ENCODE measurements at regions of chr11 and their contacts with region 1.

Region 1: GRCh38 chr11:17978553-17979287 is 34.1 kb downstream of the SERGEF start:
- DNase-seq: peak in 2 of 4 donors; percentile 36 to 40
- ATAC-seq: peak; percentile 89
- H3K4me3 ChIP-seq: no peak overlapping the region
- H3K27ac ChIP-seq: no peak overlapping the region
- H3K4me1 ChIP-seq: no peaks in the 10 kb centered on the region
- H3K27me3 ChIP-seq: no peaks in the 10 kb centered on the region
- CTCF ChIP-seq: peak; percentile 48 to 61

Region 2: GRCh38 chr11:17730608-17731462 is 247.9 kb before region 1 on chr11:
- intact Hi-C with region 1: loop called in 1 of 2 experiments (anchors 5 kb)
- DNase-seq: peak; percentile 64 to 84 (median 76)
- ATAC-seq: peak; percentile 93
- H3K4me3 ChIP-seq: no peak overlapping the region
- H3K27ac ChIP-seq: no peak overlapping the region
- H3K4me1 ChIP-seq: peaks cover 7 to 11% of the 10 kb centered on the region in 2 donors
- H3K27me3 ChIP-seq: peaks cover 26 to 81% of the 10 kb centered on the region in 2 donors
- CTCF ChIP-seq: peak; percentile 75 to 78

Region 3: GRCh38 chr11:17760102-17761029 is 218.4 kb before region 1 on chr11:
- intact Hi-C with region 1: loop called in 1 of 2 experiments (anchors 10 kb)
- DNase-seq: peak in 2 of 4 donors; percentile 28 to 46
- ATAC-seq: peak; percentile 85
- H3K4me3 ChIP-seq: no peak overlapping the region
- H3K27ac ChIP-seq: no peak overlapping the region
- H3K4me1 ChIP-seq: no peaks in the 10 kb centered on the region
- H3K27me3 ChIP-seq: no peaks in the 10 kb centered on the region
- CTCF ChIP-seq: peak; percentile 23 to 33

Region 4: GRCh38 chr11:18046116-18046777 is 67.5 kb after region 1 on chr11 and contains the start of gene TPH1:
- intact Hi-C with region 1: no loop called
- DNase-seq: peak in 3 of 4 donors; percentile 28 to 85 (median 38)
- ATAC-seq: peak; percentile 93
- H3K4me3 ChIP-seq: no peak within 1 kb of the TSS
- H3K27ac ChIP-seq: no peak within 1 kb of the TSS
- H3K4me1 ChIP-seq: no peaks in the 10 kb centered on the region
- H3K27me3 ChIP-seq: peaks cover 11 to 47% of the 10 kb centered on the region in 2 donors
- CTCF ChIP-seq: no peak
- polyA plus RNA-seq, gene TPH1: 1.6 to 3.1 (median 2.4) TPM